ENCODE measurements at regions of chr22 and their contacts with region 1.

Region 1: GRCh38 chr22:36873680-36874537 is 13.1 kb downstream of the NCF4 start:
- DNase-seq: peak; percentile 66 to 97
- H3K4me3 ChIP-seq: peak overlapping the region; percentile 8; the same call in 1 of the 2 replicates
- H3K27ac ChIP-seq: peak overlapping the region; percentile 90
- H3K4me1 ChIP-seq: peaks cover 59% of the 10 kb centered on the region
- H3K27me3 ChIP-seq: no peaks in the 10 kb centered on the region
- CTCF ChIP-seq: peak; percentile 80

Region 2: DNA sequence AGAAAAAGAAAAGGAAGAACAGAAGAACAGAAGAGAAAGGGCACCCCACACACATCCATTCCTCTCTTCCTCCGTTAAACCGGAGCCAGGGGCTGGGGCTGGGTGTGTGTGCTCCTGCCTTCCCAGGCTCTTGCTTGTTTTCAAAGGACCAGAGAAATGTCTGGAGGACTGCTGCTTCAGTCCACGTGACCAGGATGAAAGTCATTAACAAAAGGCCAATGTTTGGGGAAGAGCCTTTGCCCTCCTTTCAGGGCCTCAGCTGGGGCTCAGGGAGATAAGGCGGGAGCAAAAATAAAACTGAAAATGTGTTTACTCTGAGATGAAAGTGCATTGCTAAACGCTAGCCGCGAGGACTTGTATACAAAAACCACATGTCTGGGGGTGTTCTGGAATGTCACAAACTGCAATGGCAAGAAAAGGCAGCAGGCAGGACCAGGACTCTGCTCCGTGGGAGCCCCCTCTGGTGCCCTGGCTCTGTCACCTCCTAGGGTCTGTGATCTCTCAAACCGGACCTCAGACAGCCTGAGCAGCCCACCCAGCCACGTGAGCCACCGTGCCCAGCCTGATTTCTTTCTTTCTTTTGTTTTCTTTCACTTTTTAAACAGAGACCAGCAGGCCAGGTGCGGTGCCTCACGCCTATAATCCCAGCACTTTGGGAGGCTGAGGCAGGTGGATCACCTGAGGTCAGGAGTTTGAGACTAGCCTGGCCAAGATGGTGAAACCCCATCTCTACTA is 454.6 kb before region 1 on chr22:
- CTCF ChIA-PET with region 1: interaction called, 15 read pairs
- POLR2A ChIA-PET with region 1: no interaction called
- intact Hi-C with region 1: no loop called
- DNase-seq: peak; percentile 44 to 93
- H3K4me3 ChIP-seq: peak overlapping the region; percentile 35; the same call in 1 of the 2 replicates
- H3K27ac ChIP-seq: peak overlapping the region; percentile 66
- H3K4me1 ChIP-seq: peaks cover 43% of the 10 kb centered on the region
- H3K27me3 ChIP-seq: no peaks in the 10 kb centered on the region
- CTCF ChIP-seq: no peak

Region 3: DNA sequence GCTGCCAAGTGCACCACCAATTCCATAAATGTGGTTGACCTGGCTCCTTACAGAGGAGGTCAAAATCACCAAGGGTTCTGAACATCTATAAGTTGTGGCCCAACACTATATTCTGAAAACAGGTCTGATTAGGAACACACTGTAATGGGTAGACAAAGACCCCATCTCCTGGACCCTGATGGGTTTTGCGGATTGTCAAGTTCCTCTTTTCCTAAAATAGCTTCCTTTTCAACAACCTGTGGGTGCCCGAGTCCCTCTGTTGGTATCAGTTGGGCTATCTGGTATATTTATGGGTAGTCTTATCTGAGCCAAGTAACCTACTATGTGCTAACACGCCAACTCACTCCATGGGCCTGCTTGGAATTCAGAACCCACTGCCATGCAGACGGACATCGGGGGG is 160.5 kb before region 1 on chr22:
- CTCF ChIA-PET with region 1: no interaction called
- POLR2A ChIA-PET with region 1: no interaction called
- intact Hi-C with region 1: no loop called
- DNase-seq: no peak
- H3K4me3 ChIP-seq: no peak overlapping the region
- H3K27ac ChIP-seq: no peak overlapping the region
- H3K4me1 ChIP-seq: no peaks in the 10 kb centered on the region
- H3K27me3 ChIP-seq: peaks cover 93% of the 10 kb centered on the region
- CTCF ChIP-seq: no peak

Region 4: DNA sequence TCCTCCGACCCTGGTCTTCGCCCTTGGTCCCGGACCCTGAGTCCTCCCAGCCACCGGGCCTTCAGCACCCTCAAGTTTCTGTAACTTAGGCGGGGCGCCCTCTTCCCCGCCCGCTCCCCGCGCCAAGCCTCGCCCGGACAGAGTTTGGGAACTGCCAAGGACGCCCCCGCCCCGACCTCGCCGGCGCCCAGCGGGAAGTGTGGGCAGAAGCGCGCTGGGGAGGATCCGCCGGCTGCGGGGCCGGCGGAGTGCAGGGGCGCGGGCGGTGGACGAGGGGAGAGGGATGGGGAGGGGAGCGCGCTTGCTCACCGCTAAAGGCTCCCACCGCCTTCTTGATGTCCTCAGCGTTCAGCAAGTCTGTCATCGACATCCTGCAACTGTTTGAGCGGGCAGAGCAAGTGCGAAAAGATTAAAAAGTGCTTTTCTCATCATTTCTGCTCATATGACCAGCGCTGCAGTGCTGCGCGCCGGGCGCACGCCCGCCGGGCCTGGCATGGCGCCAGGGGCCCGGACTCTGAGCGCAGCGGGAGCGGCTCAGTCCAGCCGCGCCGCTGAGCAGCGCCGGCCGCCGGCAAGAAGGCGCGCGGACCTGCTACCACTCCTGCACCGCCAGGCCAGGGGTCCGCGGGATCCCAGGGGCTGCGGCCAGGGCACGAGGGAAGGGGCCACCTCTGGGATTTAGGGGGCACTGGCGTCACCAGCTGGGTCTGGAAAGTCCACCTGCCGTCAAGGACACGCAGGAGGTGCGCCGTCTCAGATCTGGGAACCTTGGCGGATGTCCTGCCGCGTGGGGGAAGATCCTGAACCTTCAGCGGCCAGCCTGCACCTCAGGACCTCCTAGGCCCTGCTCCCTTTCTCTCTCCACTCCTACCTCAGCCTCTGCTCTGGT is 57.0 kb before region 1 on chr22 and contains the start of gene PVALB:
- CTCF ChIA-PET with region 1: no interaction called
- POLR2A ChIA-PET with region 1: no interaction called
- intact Hi-C with region 1: no loop called
- DNase-seq: peak in 1 of 2 experiments; percentile 54
- H3K4me3 ChIP-seq: peak within 1 kb of the TSS; percentile 25; the same call in 1 of the 2 replicates
- H3K27ac ChIP-seq: no peak within 1 kb of the TSS
- H3K4me1 ChIP-seq: 0 out of 2 replicates have a peak, but pooled peaks cover 5% of the 10 kb centered on the region
- H3K27me3 ChIP-seq: peaks cover 81% of the 10 kb centered on the region
- CTCF ChIP-seq: no peak
- total RNA-seq, gene PVALB: not detected in 2 replicates

Region 5: DNA sequence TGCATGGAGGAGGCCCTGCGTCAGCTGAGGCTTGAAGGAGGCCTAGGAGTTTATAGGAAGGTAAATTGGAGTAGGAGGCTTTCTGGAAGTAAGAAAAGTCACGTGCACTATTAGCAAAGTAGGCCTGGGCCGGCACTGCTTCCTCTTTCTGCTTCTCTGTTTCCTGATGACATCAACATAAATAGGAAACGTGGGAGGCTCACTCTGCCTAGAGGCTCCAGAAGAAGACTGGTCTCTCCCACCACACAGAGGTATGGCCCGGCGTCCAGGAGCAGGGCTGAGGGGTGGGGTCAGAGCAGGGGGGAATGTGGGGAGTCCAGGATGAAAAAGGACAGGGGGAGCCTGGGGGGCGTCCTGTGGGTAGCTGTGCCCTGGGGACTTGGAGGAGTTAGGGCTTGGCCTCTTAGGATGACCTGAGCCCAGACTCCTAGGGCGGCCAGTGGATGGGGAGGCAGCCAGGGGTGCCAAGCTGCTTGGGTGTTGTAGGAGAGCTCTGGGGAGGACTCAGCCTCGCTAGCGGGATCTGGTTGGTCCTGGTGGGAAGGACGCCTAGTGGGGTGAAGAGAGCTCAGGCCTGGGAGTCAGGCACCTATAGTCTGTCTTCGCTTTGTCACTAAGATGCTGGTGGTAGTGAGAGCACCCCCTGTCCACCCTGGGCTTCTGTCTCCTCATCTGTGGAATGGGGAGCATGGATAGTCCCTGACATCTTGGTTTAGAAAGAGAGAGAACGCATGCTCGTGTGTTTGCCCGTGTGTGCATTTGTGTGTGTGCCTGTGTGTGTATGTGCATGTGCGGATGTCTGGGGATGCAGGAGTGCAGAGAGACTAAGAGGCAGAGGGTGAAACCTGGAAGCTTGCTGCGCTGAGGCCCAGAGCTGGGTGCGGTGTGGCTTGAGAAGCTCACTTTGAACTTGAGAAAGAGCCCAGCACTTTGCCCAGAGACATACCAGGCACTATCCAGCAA is 39.8 kb after region 1 on chr22 and contains the start of gene CSF2RB:
- CTCF ChIA-PET with region 1: no interaction called
- POLR2A ChIA-PET with region 1: no interaction called
- intact Hi-C with region 1: loop called (anchors 5 kb)
- DNase-seq: no peak
- H3K4me3 ChIP-seq: no peak within 1 kb of the TSS
- H3K27ac ChIP-seq: no peak within 1 kb of the TSS
- H3K4me1 ChIP-seq: 0 out of 2 replicates have a peak, but pooled peaks cover 20% of the 10 kb centered on the region
- H3K27me3 ChIP-seq: no peaks in the 10 kb centered on the region
- CTCF ChIP-seq: no peak
- total RNA-seq, gene CSF2RB: not detected in 2 replicates

Region 6: DNA sequence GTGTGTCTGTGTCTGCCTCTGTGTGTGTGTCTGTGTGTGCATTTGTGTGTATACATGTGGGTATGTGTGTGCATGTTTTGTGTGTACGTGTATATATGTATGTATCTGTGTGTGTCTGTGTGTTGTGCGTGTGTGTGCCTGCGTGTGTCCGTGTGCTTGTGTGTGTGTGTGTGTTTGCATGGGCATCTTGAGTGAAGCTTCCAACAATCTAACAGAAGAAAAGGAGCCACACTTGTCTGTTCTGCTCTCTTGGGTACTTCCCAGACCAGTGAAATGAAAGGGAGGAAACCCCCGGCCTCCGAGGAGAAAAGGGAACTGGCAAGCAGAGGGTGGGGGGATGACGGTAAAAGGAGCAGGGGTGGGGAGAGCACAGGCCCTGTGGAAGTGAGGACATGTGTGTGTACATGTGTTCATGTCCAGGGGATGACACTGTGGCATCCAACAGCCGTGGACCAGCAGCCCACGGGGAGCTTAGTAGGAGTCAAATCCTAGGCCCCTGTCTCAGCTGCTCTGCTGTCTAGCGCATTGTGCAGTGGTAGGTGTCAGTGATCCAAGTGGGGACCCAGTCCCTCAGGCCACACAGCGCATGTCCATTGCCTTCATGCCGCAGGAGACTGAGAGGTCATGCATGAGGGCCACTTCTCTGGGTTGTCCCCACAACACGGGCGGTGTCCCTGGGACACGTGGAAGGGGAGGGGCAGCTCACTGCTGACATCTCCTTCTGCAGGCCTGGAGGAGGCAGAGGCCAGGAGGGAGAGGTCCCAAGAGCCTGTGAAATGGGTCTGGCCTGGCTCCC is 47.6 kb after region 1 on chr22:
- CTCF ChIA-PET with region 1: interaction called, 3 read pairs
- POLR2A ChIA-PET with region 1: no interaction called
- intact Hi-C with region 1: loop called (anchors 2 kb)
- DNase-seq: no peak
- H3K4me3 ChIP-seq: no peak overlapping the region
- H3K27ac ChIP-seq: no peak overlapping the region
- H3K4me1 ChIP-seq: peaks cover 16% of the 10 kb centered on the region; the same call in 1 of the 2 replicates
- H3K27me3 ChIP-seq: no peaks in the 10 kb centered on the region
- CTCF ChIP-seq: no peak

Region 7: DNA sequence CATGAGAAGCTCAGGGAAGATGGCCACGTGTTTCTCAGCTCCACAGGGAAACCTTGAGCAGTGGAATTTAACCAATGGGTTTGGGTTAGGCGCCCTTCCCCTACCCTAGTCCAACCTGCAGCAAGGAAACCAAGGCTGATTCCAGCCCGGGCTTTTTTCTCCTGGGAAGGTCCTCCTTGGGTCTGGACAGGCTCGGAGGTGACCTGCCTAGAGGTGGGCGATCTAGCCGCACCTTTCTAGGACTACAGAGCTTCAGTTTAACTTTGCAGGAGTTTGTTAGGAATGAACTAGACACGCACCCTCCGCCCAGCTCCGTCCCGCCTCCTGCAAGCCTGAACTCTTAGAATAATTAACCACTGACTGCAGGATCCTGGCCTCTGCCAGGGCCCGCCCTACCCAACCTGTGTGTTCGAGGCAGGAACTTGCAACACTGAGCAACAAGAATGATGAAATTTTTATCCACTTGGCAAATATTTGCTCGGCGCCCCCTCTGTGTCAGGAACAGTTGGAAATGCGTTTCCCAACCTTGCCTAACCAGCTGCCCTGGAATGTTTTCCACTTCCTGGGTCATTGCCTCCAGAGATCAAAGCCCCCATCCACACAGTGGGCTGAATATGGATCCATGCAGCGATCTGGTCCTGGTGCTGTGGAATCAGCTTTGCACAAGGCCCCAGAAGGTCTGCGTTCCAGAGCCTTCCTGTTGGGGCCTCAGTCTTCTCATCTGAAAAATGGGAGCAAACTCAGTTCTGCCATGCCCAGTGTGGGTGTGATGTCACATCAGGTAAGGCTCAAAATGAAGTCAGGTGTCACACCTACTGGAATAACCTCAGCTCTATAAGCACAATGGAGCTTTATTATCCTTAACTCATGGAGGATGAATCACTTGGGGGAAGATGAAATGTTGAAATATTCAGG is 158.9 kb after region 1 on chr22:
- CTCF ChIA-PET with region 1: no interaction called
- POLR2A ChIA-PET with region 1: no interaction called
- intact Hi-C with region 1: loop called (anchors 5 kb)
- DNase-seq: peak; percentile 81 to 98
- H3K4me3 ChIP-seq: peak overlapping the region; percentile 50
- H3K27ac ChIP-seq: peak overlapping the region; percentile 86
- H3K4me1 ChIP-seq: peaks cover 40% of the 10 kb centered on the region
- H3K27me3 ChIP-seq: no peaks in the 10 kb centered on the region
- CTCF ChIP-seq: no peak

Measured in PC-9 (cell line).